AG04450 (cell line): ENCODE measurements at regions of chr14 and their contacts with region 1.

Region 1: GRCh38 chr14:30521899-30522736 is 36.8 kb upstream of the G2E3 start:
- DNase-seq: no peak
- H3K4me3 ChIP-seq: no peak overlapping the region
- H3K27ac ChIP-seq: no peak overlapping the region
- H3K27me3 ChIP-seq: no peaks in the 10 kb centered on the region
- CTCF ChIP-seq: peak; percentile 83

Region 2: GRCh38 chr14:30547388-30548048 is 25.4 kb after region 1 on chr14:
- CTCF ChIA-PET with region 1: interaction called, 12 read pairs
- POLR2A ChIA-PET with region 1: no interaction called
- DNase-seq: no peak
- H3K4me3 ChIP-seq: no peak overlapping the region
- H3K27ac ChIP-seq: no peak overlapping the region
- H3K27me3 ChIP-seq: no peaks in the 10 kb centered on the region
- CTCF ChIP-seq: no peak